ENCODE measurements at regions of chr22 and their contacts with region 1.

Region 1: DNA sequence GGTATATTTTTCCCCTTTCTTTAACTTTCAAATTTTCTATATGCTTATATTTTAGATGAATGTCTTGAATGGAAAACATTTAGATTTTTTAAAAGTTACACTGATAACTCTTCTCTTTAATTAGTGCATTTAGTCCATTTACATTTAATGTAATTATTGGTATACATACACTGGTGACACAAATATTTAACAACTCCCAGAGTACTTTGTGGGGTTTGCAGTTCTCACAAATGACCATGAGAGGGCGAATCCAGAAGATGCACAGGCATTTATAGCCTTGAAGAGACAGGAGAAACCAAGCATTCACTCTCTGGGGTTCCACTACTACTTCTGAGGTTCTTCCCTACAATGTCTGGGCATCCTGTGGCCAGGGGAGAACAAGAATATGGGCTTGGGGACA is 125.1 kb downstream of the TIMP3 start:
- DNase-seq: peak; percentile 44
- ATAC-seq: peak; percentile 60
- H3K4me3 ChIP-seq: no peak overlapping the region
- H3K27ac ChIP-seq: no peak overlapping the region
- H3K4me1 ChIP-seq: no peaks in the 10 kb centered on the region
- H3K27me3 ChIP-seq: no peaks in the 10 kb centered on the region
- CTCF ChIP-seq: peak; percentile 78
- EP300 ChIP-seq: no peak
- POLR2A ChIP-seq: no peak
- RAD21 ChIP-seq: 0 out of 2 replicates have a peak, but pooled peaks have one; percentile 34

Region 2: DNA sequence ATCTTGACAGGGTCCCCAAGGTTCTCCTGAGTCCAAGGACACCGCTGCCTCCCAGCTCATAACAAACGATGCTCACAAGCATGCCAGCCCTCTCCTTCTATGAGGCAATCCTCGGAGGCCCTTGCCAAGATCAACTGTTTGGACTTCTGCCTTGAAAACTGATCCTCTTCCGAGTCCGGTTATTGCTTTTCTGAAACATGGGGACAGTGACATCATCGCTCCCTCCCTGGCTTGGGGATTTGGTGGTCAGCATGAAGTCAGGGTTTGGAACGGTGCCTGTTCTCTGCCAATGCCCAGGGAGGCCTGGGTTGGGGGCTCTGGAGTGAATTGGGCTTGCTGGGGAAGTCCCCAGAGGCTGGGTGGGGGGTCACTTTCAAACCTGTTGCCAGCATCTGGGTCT is 302.7 kb before region 1 on chr22:
- CTCF ChIA-PET with region 1: no interaction called
- POLR2A ChIA-PET with region 1: no interaction called
- in situ Hi-C with region 1: no loop called
- intact Hi-C with region 1: no loop called
- DNase-seq: peak; percentile 12
- ATAC-seq: no peak
- H3K4me3 ChIP-seq: no peak overlapping the region
- H3K27ac ChIP-seq: no peak overlapping the region
- H3K4me1 ChIP-seq: peaks cover 99% of the 10 kb centered on the region
- H3K27me3 ChIP-seq: no peaks in the 10 kb centered on the region
- CTCF ChIP-seq: no peak
- EP300 ChIP-seq: no peak
- POLR2A ChIP-seq: no peak
- RAD21 ChIP-seq: no peak

Region 3: GRCh38 chr22:32985899-32986765 is 59.5 kb after region 1 on chr22:
- CTCF ChIA-PET with region 1: interaction called, 36 read pairs
- POLR2A ChIA-PET with region 1: no interaction called
- in situ Hi-C with region 1: loop called (anchors 5 kb)
- intact Hi-C with region 1: loop called (anchors 1 kb)
- DNase-seq: peak; percentile 70
- ATAC-seq: peak; percentile 99
- H3K4me3 ChIP-seq: no peak overlapping the region
- H3K27ac ChIP-seq: no peak overlapping the region
- H3K4me1 ChIP-seq: peaks cover 8% of the 10 kb centered on the region; the same call in 1 of the 2 replicates
- H3K27me3 ChIP-seq: no peaks in the 10 kb centered on the region
- CTCF ChIP-seq: peak; percentile 96
- EP300 ChIP-seq: no peak
- POLR2A ChIP-seq: no peak
- RAD21 ChIP-seq: peak; percentile 89

Region 4: DNA sequence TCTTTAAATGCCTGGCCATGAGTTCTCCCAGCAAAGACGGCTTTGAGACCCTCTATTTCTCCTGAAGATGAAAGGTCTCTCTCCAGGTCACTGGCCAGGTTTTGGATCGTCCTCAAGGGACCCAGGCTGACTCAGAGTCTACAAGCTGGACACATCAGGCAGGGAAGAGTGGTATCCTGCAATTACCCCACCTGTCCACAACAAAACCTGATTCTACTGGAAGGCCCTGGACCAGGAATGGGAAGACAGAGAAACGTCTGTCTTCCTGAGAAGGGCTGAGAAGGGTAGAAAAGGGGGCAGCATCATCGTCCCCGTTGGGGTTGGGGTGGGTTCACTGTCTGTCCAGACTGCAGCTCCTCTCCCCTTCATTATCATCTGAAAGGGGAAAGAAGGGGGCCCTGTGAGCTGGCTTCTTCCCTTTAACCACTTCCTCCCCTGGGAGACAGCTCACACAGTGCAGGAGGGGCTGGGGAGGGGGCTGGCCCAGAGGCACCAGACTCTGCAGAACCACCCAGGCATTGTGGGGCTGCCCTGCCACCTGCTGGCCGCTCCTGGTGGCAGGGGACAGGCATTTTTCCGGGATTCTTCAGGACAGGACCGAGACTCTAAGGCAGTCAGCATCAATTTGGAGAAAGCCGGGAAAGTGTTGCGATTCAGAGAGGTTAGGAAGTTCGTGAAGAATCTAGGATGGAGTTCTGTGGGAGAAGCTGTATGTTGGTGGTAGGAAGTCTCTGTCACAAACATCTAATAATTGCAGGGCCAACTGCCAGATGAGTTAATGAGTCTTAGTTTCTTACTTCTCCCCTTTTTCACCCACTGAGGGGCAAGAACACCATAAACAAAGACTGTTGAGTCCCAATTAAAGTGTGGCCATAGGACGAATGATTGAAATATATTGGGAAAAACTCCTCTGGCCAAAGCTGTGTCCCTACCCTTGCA is 74.0 kb after region 1 on chr22:
- CTCF ChIA-PET with region 1: interaction called, 11 read pairs
- POLR2A ChIA-PET with region 1: no interaction called
- in situ Hi-C with region 1: no loop called
- intact Hi-C with region 1: no loop called
- DNase-seq: peak; percentile 15
- ATAC-seq: peak; percentile 90
- H3K4me3 ChIP-seq: no peak overlapping the region
- H3K27ac ChIP-seq: no peak overlapping the region
- H3K4me1 ChIP-seq: peaks cover 5% of the 10 kb centered on the region
- H3K27me3 ChIP-seq: no peaks in the 10 kb centered on the region
- CTCF ChIP-seq: peak; percentile 91
- EP300 ChIP-seq: no peak
- POLR2A ChIP-seq: no peak
- RAD21 ChIP-seq: peak; percentile 85

Region 5: DNA sequence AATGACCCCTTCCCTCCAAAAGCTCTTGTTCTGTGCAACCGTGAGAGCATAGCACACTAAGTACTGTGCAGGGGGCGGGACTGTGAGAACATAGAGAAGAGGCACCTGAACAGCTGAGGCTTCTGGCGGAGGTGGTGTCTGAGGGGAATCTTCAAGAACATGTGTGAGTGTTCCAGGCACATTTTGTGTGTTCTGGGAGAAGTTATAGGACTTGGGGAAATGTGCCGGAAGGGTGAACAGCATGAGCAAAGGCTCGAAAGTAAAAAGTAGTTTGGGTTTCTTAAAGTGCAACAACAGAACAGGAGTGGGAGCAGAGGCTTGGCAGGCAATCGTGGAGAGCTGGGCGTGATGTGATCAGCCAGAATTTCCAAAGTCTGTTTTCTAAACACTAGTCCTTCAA is 144.0 kb after region 1 on chr22:
- CTCF ChIA-PET with region 1: no interaction called
- POLR2A ChIA-PET with region 1: no interaction called
- in situ Hi-C with region 1: no loop called
- intact Hi-C with region 1: no loop called
- DNase-seq: no peak
- ATAC-seq: no peak
- H3K4me3 ChIP-seq: no peak overlapping the region
- H3K27ac ChIP-seq: no peak overlapping the region
- H3K4me1 ChIP-seq: no peaks in the 10 kb centered on the region
- H3K27me3 ChIP-seq: peaks cover 0 to 53% of the 10 kb centered on the region in 2 experiments; a peak in 3 of 5 replicates
- CTCF ChIP-seq: no peak
- EP300 ChIP-seq: no peak
- POLR2A ChIP-seq: no peak
- RAD21 ChIP-seq: no peak

Region 6: DNA sequence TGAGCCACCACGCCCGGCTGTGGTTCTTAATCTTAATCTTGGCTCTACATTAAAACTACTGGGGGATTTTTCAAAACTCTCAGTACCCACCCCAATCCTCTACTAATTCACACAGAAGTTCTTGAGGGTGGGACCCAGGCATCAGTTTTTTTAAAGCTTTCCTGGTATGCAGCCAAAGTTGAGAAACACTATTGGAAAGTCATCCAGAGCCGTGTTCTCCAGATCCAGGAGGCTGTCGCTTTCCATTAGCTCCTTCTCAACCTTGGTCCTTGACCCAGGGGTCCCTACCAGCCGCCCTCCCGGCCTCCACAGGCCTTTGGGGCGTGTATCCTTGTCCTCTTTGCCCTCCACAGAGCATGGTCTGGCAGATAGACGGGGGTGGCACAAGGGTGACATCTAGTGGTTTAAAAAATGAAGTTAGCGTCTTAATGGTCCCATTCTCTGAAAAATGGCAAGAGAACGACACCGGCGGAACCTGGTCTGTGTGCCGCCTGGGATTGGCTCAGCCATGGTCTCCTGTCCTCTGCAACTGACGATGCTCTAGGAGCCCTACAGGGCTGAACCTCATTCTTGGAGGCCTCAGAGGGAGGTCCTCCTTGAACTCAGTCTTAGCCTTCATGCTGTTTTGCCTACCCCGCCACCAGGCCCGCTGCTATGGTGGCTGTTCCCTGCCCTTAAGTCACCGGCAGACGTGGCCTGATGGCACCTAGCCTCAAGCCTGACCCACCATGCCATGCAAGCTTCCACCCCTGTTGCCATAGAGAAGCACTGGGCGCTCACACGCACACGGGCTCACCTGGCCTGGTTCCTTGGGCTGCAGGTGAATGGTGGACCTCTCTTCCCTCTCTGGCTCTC is 283.6 kb after region 1 on chr22:
- CTCF ChIA-PET with region 1: no interaction called
- POLR2A ChIA-PET with region 1: no interaction called
- in situ Hi-C with region 1: no loop called
- intact Hi-C with region 1: loop called (anchors 10 kb)
- DNase-seq: peak; percentile 47
- ATAC-seq: peak; percentile 95
- H3K4me3 ChIP-seq: no peak overlapping the region
- H3K27ac ChIP-seq: no peak overlapping the region
- H3K4me1 ChIP-seq: no peaks in the 10 kb centered on the region
- H3K27me3 ChIP-seq: peaks cover 0 to 37% of the 10 kb centered on the region in 2 experiments; a peak in 2 of 5 replicates
- CTCF ChIP-seq: peak; percentile 81
- EP300 ChIP-seq: no peak
- POLR2A ChIP-seq: no peak
- RAD21 ChIP-seq: peak; percentile 58

Measured in HepG2 (cell line).